ENCODE measurements at regions of chr11 and their contacts with region 1.

Region 1: DNA sequence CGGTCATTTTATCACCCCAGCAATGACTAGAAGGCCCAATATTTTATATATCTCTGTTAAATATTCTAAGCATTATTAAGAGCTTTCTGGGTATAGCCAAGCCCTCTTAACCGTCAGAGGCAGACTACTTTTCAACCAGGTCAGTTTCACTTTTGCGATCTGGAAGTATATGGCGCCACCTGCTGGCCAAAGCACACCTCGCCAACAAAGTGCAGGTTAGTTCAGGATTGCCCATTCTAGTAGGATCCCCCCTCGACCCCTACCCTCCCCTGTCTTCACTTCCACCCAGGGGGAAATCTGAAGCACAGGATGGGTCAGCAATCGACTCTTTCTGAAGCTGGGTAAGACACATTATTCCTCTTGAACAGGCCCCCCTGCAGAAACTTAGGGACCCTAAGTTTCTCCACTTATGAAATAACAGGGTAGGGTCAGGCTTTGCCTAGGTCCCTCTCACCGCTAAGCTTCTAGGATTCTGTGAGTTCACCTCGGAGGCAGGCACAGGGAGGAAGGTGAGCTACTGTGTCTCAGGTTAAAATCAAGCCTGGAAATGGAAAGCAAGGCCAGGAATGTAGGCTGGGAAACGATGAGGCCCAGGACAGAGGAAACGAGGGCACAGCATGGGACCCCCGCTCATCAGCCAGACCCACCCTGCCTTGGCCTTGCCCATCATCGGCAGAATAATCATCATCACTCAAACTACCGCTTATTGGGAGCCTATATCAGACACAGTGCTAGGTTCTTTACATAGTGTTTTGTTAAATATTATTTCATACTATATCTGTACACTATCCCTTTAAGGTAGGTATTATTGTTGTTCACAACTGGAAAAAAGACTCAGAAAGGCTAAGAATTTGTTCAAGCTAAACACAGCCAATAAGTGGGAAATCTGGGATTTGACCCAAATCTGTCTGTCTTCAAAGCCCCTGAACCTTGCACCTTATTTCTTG is 35.6 kb downstream of the KCNJ1 start:
- DNase-seq: peak; percentile 87
- H3K4me3 ChIP-seq: no peak overlapping the region
- H3K27ac ChIP-seq: no peak overlapping the region
- H3K4me1 ChIP-seq: no peaks in the 10 kb centered on the region
- H3K27me3 ChIP-seq: no peaks in the 10 kb centered on the region
- CTCF ChIP-seq: peak; percentile 55 to 88 (median 77)
- EP300 ChIP-seq: no peak
- POLR2A ChIP-seq: no peak

Region 2: DNA sequence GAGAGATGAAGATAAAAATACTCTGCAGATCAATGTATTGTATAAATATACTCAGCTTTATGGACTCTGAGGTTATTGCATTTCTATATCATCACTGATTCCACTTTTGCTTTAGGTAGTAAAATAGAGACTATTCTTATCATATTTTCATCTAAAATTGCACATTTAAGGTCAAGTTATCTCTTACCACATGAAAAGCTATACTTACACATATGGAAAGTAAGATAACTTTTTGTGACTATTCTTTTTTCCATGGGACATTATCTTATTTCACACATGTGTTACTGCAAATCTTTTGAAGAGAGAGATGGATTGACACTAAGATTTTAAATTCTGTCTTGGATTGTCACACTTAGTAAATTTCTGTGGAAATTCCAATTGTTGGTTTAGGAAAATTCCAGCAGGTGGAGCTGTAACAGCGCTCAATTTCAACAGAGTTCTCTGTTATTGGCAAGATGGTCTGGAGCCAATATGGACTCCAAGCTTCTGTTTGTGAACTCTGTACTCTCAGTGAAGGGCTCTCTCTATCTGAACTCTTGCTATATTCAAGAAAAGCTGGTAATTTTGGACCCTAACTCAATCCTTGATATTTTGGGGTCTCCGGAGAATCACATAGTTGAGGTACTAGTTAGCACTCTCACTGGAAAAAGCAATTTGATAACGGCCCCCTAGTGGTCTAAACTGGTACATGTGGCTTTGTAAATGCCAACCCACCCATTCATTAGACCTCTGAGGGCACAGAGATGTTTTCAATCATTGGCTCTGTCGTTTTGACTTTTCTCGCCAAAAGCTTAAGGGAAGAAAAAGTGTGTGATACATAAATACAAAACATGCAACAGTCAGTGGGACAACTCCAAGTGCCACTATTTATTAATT is 673.8 kb before region 1 on chr11:
- intact Hi-C with region 1: loop called (anchors 5 kb)
- DNase-seq: no peak
- H3K4me3 ChIP-seq: no peak overlapping the region
- H3K27ac ChIP-seq: no peak overlapping the region
- H3K4me1 ChIP-seq: no peaks in the 10 kb centered on the region
- H3K27me3 ChIP-seq: no peaks in the 10 kb centered on the region
- CTCF ChIP-seq: peak; percentile 54 to 86 (median 82)
- EP300 ChIP-seq: no peak
- POLR2A ChIP-seq: no peak

Region 3: DNA sequence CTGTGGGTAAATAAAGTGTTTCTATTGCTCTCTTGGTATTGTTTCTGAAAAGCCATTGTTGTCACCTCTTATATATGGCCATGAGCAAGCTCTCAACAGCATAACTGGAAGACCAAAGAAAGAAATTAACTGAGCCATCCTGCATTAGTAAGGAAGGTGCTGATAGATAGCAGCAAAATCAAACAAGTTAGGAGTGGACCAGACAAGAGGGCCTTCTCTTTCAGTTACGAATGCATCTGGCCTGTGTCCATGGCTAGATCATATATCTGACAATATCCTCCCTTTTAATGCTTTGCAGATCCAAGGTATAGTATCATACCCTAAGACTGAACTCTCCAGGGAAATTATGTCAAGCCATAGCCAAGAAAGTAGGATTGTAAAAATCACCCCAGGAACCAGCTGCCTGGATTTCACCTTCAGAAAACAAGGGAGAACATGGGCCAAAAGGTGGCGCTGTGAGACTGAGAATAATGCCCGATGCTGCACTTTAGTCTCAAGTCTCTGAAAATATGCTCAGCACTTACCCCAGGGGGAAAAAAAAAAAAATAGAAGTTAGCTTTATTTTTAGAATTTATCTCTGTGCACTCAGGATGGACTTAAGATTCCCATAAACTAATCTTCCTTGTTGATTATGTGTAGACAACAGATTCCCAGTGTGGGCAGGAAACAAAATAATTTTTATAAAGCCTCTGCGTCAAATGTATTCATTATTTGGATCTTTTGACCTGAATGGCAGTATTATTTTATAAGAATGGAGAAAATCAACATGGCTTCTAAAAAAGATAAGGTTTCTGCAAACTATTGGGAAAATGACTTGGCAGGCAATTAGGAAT is 659.2 kb before region 1 on chr11:
- intact Hi-C with region 1: loop called (anchors 1 kb)
- DNase-seq: peak; percentile 86
- H3K4me3 ChIP-seq: no peak overlapping the region
- H3K27ac ChIP-seq: no peak overlapping the region
- H3K4me1 ChIP-seq: no peaks in the 10 kb centered on the region
- H3K27me3 ChIP-seq: no peaks in the 10 kb centered on the region
- CTCF ChIP-seq: peak; percentile 60 to 70 (median 64)
- EP300 ChIP-seq: no peak
- POLR2A ChIP-seq: no peak

Region 4: GRCh38 chr11:128290106-128290840 is 541.2 kb before region 1 on chr11:
- intact Hi-C with region 1: loop called (anchors 5 kb)
- DNase-seq: peak; percentile 78
- H3K4me3 ChIP-seq: peak overlapping the region in 2 of 4 donors; percentile 22 to 25
- H3K27ac ChIP-seq: peak overlapping the region; percentile 30 to 68 (median 54)
- H3K4me1 ChIP-seq: peaks cover 0 to 21% (median 15%) of the 10 kb centered on the region in 4 donors
- H3K27me3 ChIP-seq: no peaks in the 10 kb centered on the region
- CTCF ChIP-seq: peak; percentile 80 to 85 (median 84)
- EP300 ChIP-seq: no peak
- POLR2A ChIP-seq: no peak

Region 5: DNA sequence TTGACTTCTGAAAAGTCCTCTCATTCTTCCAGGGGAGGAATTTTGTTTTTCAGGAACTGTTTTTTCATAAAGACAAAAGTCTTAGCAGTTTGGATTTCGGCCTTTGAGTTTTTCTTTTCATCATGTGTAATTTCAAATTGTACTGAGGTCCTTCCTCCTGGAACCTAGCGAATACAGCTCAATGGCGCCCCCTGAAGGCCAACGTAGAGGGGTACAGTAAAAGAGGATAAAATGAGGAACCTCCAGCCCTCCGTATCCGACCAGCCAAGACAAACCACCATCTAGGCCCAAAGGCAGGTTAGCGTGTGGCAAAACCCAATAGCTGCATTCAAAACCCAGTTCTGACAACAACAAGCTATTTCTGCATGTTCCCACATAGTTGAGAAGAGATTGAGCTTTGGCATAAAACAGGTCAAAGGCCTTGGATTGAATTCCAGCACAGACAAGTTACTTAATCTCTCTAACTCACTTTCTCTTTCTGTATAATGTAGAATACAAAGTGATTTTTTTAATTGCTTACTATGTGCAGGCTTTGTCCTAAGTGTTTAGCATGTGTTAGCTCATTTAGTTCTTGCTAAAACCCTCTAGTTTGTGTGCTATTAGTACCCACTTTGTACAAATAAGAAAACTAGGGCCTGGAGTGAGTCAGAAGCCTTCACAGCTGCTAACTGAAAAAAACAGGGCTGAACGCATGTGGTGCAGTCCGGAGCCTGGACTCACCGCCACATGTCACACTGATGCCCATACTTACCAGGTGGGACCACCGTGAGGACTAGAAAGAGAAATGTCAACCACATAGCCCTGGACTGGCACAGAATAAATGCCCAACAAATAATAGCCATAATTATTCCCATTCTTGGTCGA is 200.8 kb before region 1 on chr11:
- intact Hi-C with region 1: loop called (anchors 2 kb)
- DNase-seq: peak; percentile 94
- H3K4me3 ChIP-seq: no peak overlapping the region
- H3K27ac ChIP-seq: peak overlapping the region in 2 of 4 donors; percentile 3 to 35
- H3K4me1 ChIP-seq: peaks cover 0 to 12% (median 3%) of the 10 kb centered on the region in 4 donors
- H3K27me3 ChIP-seq: no peaks in the 10 kb centered on the region
- CTCF ChIP-seq: peak; percentile 74 to 92 (median 87)
- EP300 ChIP-seq: no peak
- POLR2A ChIP-seq: no peak

Measured in sigmoid colon (tissue), 7 donors.